ENCODE measurements at regions of chr2 and their contacts with region 1.

Region 1: GRCh38 chr2:54522624-54523281 is 66.6 kb downstream of the SPTBN1 start:
- DNase-seq: peak; percentile 47
- H3K4me3 Mint-ChIP-seq: no peak overlapping the region
- H3K27ac Mint-ChIP-seq: no peak overlapping the region
- H3K4me1 Mint-ChIP-seq: peaks cover 25% of the 10 kb centered on the region
- H3K27me3 Mint-ChIP-seq: peaks cover 25% of the 10 kb centered on the region

Region 2: DNA sequence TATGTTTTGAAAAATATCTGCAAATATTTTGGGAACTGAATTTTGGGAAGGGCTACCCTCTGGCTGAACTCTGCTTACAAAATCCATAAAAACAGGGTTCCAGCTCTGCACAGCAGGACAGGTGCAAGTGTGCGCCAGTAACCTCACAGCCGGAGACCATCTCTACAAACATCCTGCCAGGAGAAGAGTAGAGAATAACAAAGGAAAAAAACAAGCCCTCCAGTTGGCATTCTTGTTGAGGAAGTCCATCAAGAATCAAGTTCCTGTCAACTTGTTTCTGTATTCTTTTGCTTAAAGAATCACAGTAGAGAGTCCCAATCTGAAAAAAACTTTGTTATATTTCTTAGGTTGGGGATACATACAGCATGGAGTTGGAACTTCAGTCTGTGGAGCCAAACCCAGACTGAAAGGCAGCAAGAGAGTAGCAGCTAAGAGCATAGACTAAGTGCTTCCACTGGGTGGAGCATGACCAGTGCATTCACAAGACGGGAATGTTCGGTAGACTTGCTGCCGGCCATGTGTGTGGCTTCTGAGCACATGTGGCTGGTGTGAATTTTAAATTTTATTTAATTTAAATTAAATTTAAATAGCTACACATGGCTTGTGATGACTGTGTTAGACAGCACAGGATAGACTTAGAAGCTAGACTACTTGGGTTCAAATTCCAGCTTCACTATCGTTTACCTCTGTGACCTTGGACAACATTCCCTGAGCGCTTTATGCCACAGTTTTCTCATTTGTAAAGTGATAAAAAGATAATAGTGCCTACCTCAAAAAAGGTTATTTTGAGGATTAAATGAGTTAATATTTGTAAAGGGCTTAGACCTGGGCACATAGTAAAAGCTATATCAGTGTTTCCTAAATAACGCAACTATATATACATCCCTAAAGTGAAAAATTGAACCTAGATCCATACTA is 24.7 kb before region 1 on chr2:
- intact Hi-C with region 1: no loop called
- DNase-seq: no peak
- H3K4me3 Mint-ChIP-seq: no peak overlapping the region
- H3K27ac Mint-ChIP-seq: no peak overlapping the region
- H3K4me1 Mint-ChIP-seq: no peaks in the 10 kb centered on the region
- H3K27me3 Mint-ChIP-seq: peaks cover 36% of the 10 kb centered on the region

Region 3: GRCh38 chr2:54535599-54536195 is 12.9 kb after region 1 on chr2:
- intact Hi-C with region 1: no loop called
- DNase-seq: no peak
- H3K4me3 Mint-ChIP-seq: no peak overlapping the region
- H3K27ac Mint-ChIP-seq: no peak overlapping the region
- H3K4me1 Mint-ChIP-seq: peaks cover 15% of the 10 kb centered on the region
- H3K27me3 Mint-ChIP-seq: peaks cover 18% of the 10 kb centered on the region

Region 4: DNA sequence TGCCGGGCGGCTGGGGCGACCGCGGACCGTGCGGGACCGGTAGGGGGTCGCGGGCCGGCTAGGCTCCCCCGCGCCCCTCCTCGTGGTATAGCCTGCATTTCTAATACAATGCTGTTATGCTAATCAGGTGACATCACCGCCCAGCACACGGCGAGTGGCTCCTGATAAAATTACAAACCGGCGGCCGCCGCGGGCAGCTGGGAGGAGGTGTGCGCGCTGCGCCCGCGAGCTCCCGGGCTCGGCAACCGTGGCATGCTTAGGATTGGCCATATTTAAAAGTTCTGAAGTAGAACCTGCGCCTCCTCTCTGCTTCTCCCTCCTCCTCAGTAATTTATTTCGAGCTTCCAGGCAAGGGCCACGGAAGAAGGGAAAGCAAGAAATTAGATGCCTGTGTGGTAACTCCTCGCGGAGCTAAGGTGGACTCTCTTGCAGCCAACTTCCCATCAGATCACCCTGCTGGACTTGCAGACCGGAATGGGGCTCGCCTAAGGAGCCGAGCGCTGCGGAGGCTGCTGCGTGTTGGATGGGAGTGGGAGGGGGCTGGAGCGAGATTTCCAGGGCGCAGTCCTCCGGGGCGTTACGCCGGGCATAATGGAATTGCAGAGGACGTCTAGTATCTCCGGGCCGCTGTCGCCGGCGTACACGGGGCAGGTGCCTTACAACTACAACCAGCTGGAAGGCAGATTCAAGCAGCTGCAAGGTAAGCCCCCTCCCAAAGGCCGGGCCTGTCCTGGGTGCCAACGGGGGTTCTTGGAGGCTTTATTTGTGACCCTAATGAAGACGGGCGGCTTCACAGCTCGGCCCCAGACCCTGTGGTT is 35.6 kb after region 1 on chr2:
- intact Hi-C with region 1: loop called (anchors 5 kb)
- DNase-seq: peak; percentile 69
- H3K4me3 Mint-ChIP-seq: peak overlapping the region; percentile 90
- H3K27ac Mint-ChIP-seq: peak overlapping the region; percentile 73
- H3K4me1 Mint-ChIP-seq: peaks cover 51% of the 10 kb centered on the region
- H3K27me3 Mint-ChIP-seq: no peaks in the 10 kb centered on the region

Region 5: DNA sequence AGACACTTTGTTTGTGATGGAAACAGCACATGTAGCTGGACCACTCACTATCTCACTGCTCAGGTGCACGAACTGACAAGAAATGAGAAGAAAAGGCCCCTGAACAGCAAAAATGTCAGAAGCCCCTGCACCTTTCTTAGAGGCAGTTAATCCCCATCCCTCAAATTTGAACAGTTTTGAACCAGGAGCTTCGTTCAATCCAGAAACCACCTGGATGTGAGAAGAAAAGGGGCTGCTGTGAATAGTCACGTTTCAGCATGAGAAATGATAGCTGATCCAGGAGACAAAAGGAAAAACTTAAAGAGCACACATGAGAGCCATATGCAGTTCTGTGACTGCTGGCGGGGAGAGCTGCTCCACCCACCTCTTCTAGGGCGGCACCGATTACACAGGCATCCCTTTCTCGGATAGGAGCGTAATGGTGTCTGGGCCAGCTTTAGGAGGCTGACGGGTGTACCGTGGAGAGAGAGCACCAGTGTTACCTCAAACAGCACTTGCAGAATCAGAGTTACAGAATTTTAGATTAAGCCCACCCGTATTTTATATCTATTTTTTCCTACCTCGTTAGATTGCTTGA is 83.7 kb after region 1 on chr2:
- intact Hi-C with region 1: loop called (anchors 2 kb)
- DNase-seq: no peak
- H3K4me3 Mint-ChIP-seq: peak overlapping the region; percentile 31
- H3K27ac Mint-ChIP-seq: peak overlapping the region; percentile 81
- H3K4me1 Mint-ChIP-seq: peaks cover 76% of the 10 kb centered on the region
- H3K27me3 Mint-ChIP-seq: no peaks in the 10 kb centered on the region

Region 6: GRCh38 chr2:54657664-54658083 is 134.9 kb after region 1 on chr2:
- intact Hi-C with region 1: loop called (anchors 1 kb)
- DNase-seq: no peak
- H3K4me3 Mint-ChIP-seq: no peak overlapping the region
- H3K27ac Mint-ChIP-seq: peak overlapping the region; percentile 8
- H3K4me1 Mint-ChIP-seq: peaks cover 21% of the 10 kb centered on the region
- H3K27me3 Mint-ChIP-seq: no peaks in the 10 kb centered on the region

Region 7: DNA sequence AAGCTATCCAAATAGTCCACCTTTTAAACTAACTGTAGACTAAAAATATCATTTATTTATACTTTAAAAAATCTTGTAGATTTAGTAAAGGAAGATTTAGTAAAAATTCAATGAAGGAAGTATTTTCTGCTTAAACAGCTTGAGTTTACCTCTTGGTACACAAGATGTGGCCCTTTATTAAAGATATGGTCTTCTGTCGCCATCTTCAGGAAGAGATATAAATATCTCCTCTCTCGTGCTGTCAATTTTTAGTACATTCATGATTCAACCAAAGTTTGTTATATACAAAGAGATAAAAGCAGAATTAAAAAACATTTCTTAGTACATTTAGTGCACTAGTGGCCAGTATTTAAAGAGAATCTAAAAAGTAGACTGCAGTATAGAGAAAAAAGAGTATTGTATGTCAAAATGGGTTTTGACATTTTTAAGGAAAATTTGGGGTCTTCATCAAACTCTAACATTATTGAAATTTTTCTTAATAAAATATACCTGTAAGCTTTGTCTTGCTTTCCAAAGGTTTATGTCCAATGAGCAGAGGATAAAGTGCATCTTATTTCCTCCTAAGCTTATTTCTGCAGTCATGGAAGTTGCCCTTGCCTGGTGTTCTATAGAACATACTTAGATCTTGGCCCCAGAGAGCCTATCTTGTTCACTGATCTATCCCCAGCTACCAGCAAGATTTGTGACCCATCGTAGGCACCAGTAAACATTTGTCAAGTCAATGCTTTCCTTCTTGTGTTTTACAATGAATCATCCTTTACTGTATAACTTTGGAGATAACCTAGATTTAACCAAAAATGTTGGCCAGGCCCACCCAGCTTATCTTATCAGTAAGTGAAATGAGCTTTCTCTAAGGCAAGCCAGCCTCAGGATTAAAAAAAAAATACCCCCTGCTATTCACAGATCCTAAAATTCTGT is 182.2 kb after region 1 on chr2:
- intact Hi-C with region 1: loop called (anchors 1 kb)
- DNase-seq: no peak
- H3K4me3 Mint-ChIP-seq: no peak overlapping the region
- H3K27ac Mint-ChIP-seq: no peak overlapping the region
- H3K4me1 Mint-ChIP-seq: peaks cover 15% of the 10 kb centered on the region
- H3K27me3 Mint-ChIP-seq: peaks cover 53% of the 10 kb centered on the region

Region 8: DNA sequence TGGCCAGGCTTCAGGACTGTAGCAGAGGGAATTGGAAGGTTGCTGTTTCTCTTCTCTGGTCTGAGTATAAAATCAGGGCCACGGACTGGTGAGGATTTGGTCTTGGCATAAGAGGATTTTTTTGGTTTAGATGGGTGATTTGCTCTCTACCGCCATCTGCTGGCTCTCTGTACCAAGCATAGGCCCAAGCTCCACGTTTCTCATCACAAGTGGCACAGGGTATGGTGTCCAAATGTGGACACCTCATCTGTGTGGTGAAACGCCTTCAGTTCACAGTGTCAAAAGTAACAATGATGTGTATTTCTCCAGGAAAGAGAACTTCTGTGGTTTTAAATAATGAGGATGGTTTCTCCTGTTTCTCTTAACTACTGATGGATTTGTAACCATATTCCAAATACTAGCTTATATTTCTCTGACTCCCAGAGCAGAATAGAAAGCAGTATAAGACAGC is 315.9 kb after region 1 on chr2:
- intact Hi-C with region 1: loop called (anchors 2 kb)
- DNase-seq: peak; percentile 26
- H3K4me3 Mint-ChIP-seq: no peak overlapping the region
- H3K27ac Mint-ChIP-seq: no peak overlapping the region
- H3K4me1 Mint-ChIP-seq: no peaks in the 10 kb centered on the region
- H3K27me3 Mint-ChIP-seq: peaks cover 5% of the 10 kb centered on the region

Region 9: GRCh38 chr2:55010149-55010591 is 487.4 kb after region 1 on chr2:
- intact Hi-C with region 1: no loop called
- DNase-seq: peak; percentile 40
- H3K4me3 Mint-ChIP-seq: peak overlapping the region; percentile 85
- H3K27ac Mint-ChIP-seq: peak overlapping the region; percentile 70
- H3K4me1 Mint-ChIP-seq: peaks cover 56% of the 10 kb centered on the region
- H3K27me3 Mint-ChIP-seq: no peaks in the 10 kb centered on the region

Measured in activated T-helper 2 cell treated with anti-CD3 and anti-CD28 coated beads, Interferon-gamma antibody, Interleukin-2, Interleukin-4, amounts not matched to agents 10 μg/mL and 5 μg/mL and 100 μg/mL, durations not matched to agents 14 hours and 24 hours and 36 hours (primary cell).